AG04449 (cell line): ENCODE measurements at regions of chr1 and their contacts with region 1.

Region 1: DNA sequence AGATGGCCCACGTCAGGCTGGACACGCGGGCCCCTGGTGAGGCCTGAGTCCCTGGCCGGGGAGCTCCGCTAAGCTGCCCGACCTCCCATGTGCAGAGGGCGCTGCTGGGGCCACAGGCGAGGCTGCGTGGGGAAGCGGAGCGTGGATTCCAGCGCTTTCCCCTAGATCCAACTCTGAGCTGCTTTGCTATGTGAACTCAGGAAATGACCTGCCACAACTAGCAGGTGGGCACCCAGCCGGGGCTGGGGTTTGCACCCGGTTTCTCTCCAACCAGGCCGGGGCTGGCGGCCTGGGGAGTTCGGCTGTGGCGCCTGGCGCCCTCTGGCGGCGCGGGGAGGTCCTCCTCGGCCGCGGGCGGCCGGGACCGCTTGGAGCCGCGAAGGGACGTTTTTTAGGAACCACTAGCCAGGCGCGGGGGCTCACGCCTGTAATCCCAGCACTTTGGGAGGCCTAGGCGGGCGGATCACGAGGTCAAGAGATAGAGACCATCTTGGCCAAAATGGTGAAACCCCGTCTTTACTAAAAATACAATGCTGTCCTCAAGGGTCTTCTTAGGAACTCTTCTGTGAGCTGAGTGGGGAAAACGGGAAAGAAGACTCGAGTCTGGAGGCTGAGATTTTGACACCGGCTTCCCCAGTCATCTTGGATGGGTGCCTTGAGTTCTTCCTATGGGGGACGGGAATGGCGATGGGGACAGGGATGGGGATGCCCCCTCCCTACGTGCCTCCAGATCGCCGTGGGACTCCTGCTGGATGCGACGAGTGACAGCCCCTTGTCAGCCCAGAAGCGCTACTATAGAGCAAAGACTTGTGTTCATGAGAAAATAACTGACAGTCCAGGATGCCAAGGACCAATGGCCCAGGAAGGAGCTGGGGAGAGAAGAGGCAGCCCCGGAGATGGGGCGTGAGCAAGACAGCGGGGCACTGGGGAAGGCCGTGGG is 12.6 kb downstream of the PYCR2 start:
- DNase-seq: no peak
- H3K4me3 ChIP-seq: no peak overlapping the region; the same call in 1 of the 2 replicates
- CTCF ChIP-seq: peak; percentile 77

Region 2: DNA sequence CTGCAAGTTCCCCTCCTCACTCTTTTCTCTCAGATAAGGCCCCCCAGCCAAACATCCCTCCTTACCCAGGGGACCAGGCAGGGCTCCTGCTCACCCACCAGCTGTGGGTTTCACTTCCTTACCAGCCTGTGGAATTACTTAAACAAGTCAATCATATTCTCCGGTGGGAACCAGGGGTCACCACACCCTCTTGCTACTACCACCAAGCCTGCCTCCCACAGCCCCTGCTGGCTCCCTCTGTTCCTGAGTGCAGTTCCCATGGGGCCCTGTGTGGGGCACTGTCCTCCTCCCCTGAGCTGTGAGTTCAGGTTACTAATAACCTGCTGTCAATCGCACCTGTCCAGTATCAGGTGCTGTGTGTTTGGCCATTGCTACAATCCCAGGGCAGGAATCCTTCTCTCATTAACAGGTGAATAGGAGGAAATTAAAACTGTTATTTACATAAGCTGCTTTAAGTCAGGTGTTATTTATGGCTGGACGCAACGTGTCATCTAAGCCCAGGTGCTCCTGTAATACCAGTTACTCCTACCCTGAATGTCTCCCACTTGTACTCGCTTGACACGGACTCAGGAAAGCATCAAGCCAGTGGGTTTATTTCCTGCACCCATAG is 430.5 kb before region 1 on chr1:
- CTCF ChIA-PET with region 1: interaction called, 190 read pairs
- POLR2A ChIA-PET with region 1: no interaction called
- DNase-seq: no peak
- H3K4me3 ChIP-seq: no peak overlapping the region
- CTCF ChIP-seq: peak; percentile 81

Region 3: GRCh38 chr1:225881969-225882693 is 29.3 kb before region 1 on chr1 and contains the start of gene TMEM63A:
- CTCF ChIA-PET with region 1: interaction called, 16 read pairs
- POLR2A ChIA-PET with region 1: no interaction called
- DNase-seq: no peak
- H3K4me3 ChIP-seq: peak within 1 kb of the TSS; percentile 90
- CTCF ChIP-seq: peak; percentile 55

Region 4: DNA sequence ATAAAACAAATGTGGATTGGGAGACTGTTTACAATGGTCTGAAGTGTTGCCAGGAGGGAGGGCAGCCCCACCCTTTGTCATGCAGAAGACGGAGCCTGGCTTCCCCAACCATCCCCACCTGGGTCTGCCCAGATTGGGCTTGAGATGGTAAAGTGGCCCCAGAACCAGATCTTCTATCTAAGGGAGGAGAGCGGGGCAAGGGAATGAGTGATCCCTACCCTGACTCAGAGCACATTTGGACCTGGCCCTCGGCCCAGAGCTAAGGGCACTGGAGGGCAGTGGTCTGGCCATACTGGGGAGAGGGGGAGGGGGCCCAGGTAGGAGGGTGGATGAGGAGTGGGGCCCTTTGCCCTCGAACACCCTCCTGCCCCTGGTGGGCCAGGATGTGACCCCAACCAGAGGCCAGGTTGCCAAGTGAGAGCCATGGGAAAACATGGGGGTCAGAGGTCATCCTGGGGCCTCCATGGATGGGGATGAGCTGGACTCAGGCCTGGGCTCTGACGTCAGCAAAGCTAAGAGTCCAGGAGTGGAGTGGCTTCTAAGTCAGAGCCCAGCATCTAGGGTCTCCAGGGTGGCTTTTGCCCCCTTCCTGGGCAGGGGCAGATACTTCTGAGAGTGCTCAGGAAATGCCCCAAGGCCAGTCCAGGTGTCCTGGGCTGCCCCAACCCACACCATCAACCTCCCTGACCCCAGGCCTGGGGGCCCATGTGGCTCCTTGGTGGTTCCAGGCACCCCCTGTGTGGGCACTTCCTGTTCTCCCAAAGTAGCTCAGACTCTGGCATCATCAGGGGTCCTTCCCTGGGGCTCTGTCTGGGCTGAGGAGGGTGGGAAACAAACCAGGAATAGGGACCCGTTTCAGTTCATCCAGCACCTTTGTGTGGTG is 20.9 kb before region 1 on chr1:
- CTCF ChIA-PET with region 1: interaction called, 12 read pairs
- POLR2A ChIA-PET with region 1: no interaction called
- DNase-seq: no peak
- H3K4me3 ChIP-seq: no peak overlapping the region
- CTCF ChIP-seq: no peak

Region 5: GRCh38 chr1:225896937-225897549 is 14.4 kb before region 1 on chr1:
- CTCF ChIA-PET with region 1: interaction called, 45 read pairs
- POLR2A ChIA-PET with region 1: no interaction called
- DNase-seq: no peak
- H3K4me3 ChIP-seq: no peak overlapping the region
- CTCF ChIP-seq: no peak

Region 6: DNA sequence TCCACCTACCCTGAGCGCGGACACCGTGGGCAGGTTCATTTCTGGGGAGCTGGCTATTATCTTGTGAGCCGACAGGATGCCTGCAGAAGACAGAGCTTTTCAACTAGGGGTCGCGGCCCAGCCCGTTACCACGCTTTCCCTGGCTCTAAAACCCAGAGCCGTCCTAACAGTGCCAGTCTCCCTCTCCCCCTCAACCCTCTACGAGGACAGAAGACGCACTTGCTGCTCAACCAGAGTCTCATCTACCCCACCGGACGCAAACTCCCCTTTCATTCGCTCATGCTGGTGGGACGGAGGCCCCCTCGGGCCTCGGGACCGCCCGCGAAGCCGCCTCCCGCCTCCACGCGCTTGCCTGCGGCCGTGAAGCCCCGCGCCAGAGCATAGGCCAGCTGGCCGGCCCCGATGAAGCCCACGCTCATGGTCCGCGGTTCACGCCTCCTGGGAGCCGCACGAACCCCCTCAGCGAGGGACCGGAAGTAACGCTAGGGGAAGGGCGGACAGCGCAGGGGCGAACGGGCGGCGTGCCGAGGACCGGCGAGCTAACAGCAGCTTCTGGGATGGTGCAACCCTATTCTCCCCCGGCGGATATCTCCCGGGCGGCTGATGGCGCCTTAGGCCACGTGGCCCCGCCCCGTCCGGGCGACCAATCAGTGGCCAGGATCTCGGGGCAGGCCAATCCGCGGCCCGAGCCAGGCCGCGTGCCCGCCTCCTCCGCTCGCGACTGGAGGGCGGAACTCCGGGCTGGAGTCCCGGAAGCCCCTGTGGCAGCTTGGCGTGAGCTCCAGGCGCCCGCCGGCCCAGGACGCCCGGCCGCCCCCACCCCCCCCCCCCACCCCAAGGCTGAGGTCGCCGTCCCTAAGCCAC is 12.5 kb after region 1 on chr1 and contains the start of gene PYCR2:
- CTCF ChIA-PET with region 1: interaction called, 95 read pairs
- POLR2A ChIA-PET with region 1: interaction called, 4 read pairs
- DNase-seq: peak; percentile 75
- H3K4me3 ChIP-seq: peak within 1 kb of the TSS; percentile 95
- CTCF ChIP-seq: no peak

Region 7: GRCh38 chr1:225977937-225978748 is 66.7 kb after region 1 on chr1:
- CTCF ChIA-PET with region 1: interaction called, 18 read pairs
- POLR2A ChIA-PET with region 1: no interaction called
- DNase-seq: no peak
- H3K4me3 ChIP-seq: no peak overlapping the region
- CTCF ChIP-seq: no peak